Mammary epithelial cell (primary cell): ENCODE measurements at regions of chr6 and their contacts with region 1.

Region 1: GRCh38 chr6:6803572-6803971 is 215.1 kb downstream of the LY86 start:
- DNase-seq: peak; percentile 100
- H3K4me3 ChIP-seq: peak overlapping the region in 1 of 3 experiments; percentile 6
- H3K27ac ChIP-seq: peak overlapping the region; percentile 98
- H3K4me1 ChIP-seq: peaks cover 25% of the 10 kb centered on the region
- H3K27me3 ChIP-seq: no peaks in the 10 kb centered on the region
- CTCF ChIP-seq: peak in 1 of 2 donors; percentile 17

Region 2: DNA sequence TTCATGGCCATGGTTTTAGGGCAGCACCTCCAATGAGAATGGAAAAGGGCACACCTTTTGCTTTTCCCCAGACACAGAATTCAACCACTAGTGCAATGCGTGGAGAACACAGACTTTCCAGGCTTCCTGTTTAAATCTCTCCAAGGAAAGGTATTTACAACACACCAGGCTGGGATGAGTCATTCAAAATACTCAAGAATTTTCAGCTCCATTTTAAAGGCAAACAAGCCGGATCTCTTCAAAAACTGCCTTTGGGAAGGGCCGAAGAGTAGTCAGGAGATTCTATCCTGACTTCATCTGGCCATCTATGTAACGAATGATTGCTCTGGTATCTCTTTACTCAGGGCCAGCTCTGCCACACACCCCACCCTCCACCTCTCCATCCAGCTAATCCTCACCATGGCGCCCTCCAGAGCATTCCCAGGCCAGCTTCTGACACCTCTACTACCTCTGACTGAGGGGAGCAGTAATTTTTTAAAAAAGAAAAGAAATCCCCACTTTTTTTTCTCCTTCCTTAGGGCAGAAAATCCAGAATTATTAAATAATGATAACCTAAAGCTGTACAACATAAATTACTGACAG is 39.6 kb after region 1 on chr6:
- CTCF ChIA-PET with region 1: no interaction called
- dilution Hi-C with region 1: no loop called
- in situ Hi-C with region 1: no loop called
- intact Hi-C with region 1: loop called (anchors 2 kb)
- DNase-seq: peak; percentile 59
- H3K4me3 ChIP-seq: no peak overlapping the region
- H3K27ac ChIP-seq: no peak overlapping the region
- H3K4me1 ChIP-seq: peaks cover 19% of the 10 kb centered on the region
- H3K27me3 ChIP-seq: no peaks in the 10 kb centered on the region
- CTCF ChIP-seq: no peak

Region 3: GRCh38 chr6:6856538-6857523 is 53.3 kb after region 1 on chr6:
- CTCF ChIA-PET with region 1: no interaction called
- dilution Hi-C with region 1: no loop called
- in situ Hi-C with region 1: no loop called
- intact Hi-C with region 1: loop called (anchors 2 kb)
- DNase-seq: peak; percentile 53
- H3K4me3 ChIP-seq: no peak overlapping the region
- H3K27ac ChIP-seq: peak overlapping the region; percentile 13
- H3K4me1 ChIP-seq: peaks cover 15% of the 10 kb centered on the region
- H3K27me3 ChIP-seq: no peaks in the 10 kb centered on the region
- CTCF ChIP-seq: no peak

Region 4: DNA sequence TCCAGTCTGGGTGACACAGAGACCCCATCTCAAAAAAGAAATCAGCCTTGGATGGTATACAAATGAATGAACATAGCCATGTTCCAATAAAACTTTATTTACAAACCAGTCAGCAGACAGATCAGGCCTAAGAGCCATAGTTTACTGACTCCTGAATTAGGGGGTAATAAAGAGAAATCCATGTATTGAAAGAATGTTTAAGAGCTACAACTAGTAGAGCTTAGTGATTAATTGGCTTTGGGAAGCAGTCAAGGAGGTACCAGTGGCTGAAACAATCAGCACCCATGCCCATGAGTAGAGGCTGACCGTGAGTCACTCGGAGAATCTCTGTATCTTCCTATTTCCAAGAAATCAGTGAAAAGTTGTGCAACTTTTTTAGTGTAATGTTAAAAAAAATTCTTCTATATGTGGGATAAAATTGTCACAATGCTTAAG is 80.6 kb after region 1 on chr6:
- CTCF ChIA-PET with region 1: no interaction called
- dilution Hi-C with region 1: no loop called
- in situ Hi-C with region 1: no loop called
- intact Hi-C with region 1: loop called (anchors 1 kb)
- DNase-seq: no peak
- H3K4me3 ChIP-seq: no peak overlapping the region
- H3K27ac ChIP-seq: no peak overlapping the region
- H3K4me1 ChIP-seq: no peaks in the 10 kb centered on the region
- H3K27me3 ChIP-seq: no peaks in the 10 kb centered on the region
- CTCF ChIP-seq: no peak

Region 5: DNA sequence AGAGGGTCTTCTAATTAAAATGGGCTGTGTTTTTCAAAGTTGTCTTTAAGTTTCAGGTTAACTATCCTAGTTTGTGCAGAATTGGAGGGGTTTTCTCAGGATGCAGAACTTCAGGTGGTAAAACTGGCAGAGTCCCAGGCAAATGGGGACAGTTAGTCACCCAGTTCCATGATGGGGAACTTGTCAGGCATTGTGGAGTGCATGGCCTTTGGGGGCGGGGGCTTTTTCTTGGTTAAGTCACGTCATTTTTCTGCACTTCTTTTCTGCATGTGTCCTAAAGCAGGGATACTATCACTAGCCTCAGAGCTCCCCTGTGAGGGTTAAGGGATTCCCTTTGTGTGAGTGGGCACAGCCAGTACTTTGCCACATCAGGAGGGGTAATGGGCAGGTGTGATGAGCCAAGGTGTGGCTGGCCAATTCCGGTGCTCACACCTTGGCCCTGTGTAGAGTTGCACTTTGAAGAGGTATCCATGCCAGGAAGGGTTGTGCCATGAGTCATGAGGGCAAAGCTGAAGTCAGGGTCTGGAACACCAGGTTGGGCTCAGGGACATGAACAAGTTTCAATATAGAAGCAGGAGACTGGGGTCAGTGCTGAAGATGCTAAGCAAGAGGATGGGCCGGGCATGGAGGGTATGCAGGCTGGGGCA is 178.2 kb after region 1 on chr6:
- CTCF ChIA-PET with region 1: no interaction called
- dilution Hi-C with region 1: no loop called
- in situ Hi-C with region 1: no loop called
- intact Hi-C with region 1: loop called (anchors 5 kb)
- DNase-seq: peak; percentile 58
- H3K4me3 ChIP-seq: no peak overlapping the region
- H3K27ac ChIP-seq: no peak overlapping the region
- H3K4me1 ChIP-seq: peaks cover 24% of the 10 kb centered on the region
- H3K27me3 ChIP-seq: no peaks in the 10 kb centered on the region
- CTCF ChIP-seq: no peak

Region 6: GRCh38 chr6:7145885-7146828 is 342.6 kb after region 1 on chr6:
- CTCF ChIA-PET with region 1: no interaction called
- dilution Hi-C with region 1: no loop called
- in situ Hi-C with region 1: no loop called
- intact Hi-C with region 1: loop called (anchors 5 kb)
- DNase-seq: peak; percentile 68
- H3K4me3 ChIP-seq: peak overlapping the region; percentile 6 to 25 (median 7)
- H3K27ac ChIP-seq: peak overlapping the region; percentile 63
- H3K4me1 ChIP-seq: peaks cover 52% of the 10 kb centered on the region
- H3K27me3 ChIP-seq: no peaks in the 10 kb centered on the region
- CTCF ChIP-seq: no peak